ENCODE measurements at regions of chr1 and their contacts with region 1.

Region 1: DNA sequence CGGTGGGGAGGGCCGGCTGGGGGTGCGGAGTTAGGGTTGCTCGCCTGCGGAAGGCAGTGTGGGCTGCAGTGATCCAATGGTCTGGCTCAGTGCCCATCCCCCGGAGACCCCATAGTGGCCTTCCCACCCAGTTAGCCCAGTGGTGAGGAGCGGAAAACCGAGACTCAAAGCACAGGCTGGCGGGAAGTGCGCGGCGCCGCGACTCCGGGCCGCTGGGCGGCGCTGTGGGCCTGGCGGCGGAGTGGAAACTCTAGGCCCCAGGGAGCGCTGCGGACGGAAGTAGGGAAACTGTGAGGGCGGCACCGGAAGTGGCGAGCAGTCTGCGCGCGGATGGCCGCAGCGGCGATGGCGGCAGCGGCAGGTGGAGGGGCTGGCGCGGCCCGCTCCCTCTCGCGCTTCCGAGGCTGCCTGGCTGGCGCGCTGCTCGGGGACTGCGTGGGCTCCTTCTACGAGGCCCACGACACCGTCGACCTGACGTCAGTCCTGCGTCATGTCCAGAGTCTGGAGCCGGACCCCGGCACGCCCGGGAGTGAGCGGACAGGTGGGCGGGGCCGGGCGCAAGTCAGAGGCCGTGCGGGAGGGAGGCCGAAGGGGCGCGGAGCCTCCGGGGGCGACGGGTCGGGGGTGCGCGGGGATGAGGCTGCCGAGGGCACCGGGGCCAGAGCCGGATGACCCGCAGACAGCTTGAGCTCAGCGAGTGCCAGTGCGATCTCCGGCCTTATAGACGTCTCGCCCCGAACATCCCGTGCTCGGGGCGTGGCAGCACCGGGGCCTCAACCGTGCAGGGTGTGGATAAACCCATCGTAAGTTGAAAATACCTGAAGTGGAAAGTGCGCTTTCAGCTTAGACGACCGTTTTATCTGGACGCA is at the start of gene ADPRS:
- DNase-seq: peak; percentile 88
- H3K4me3 Mint-ChIP-seq: peak within 1 kb of the TSS; percentile 97
- H3K27ac Mint-ChIP-seq: peak within 1 kb of the TSS; percentile 96
- H3K4me1 Mint-ChIP-seq: peaks cover 20% of the 10 kb centered on the region
- H3K27me3 Mint-ChIP-seq: peaks cover 7% of the 10 kb centered on the region
- total RNA-seq, gene ADPRS: 32.6 and 33.6 TPM in 2 replicates

Region 2: GRCh38 chr1:35882945-35883634 is 205.7 kb before region 1 on chr1 and contains the start of gene AGO1:
- intact Hi-C with region 1: loop called (anchors 1 kb)
- DNase-seq: peak; percentile 97
- H3K4me3 Mint-ChIP-seq: peak within 1 kb of the TSS; percentile 95
- H3K27ac Mint-ChIP-seq: peak within 1 kb of the TSS; percentile 64
- H3K4me1 Mint-ChIP-seq: peaks cover 48% of the 10 kb centered on the region
- H3K27me3 Mint-ChIP-seq: peaks cover 6% of the 10 kb centered on the region
- total RNA-seq, gene AGO1: 39.0 and 39.5 TPM in 2 replicates

Region 3: DNA sequence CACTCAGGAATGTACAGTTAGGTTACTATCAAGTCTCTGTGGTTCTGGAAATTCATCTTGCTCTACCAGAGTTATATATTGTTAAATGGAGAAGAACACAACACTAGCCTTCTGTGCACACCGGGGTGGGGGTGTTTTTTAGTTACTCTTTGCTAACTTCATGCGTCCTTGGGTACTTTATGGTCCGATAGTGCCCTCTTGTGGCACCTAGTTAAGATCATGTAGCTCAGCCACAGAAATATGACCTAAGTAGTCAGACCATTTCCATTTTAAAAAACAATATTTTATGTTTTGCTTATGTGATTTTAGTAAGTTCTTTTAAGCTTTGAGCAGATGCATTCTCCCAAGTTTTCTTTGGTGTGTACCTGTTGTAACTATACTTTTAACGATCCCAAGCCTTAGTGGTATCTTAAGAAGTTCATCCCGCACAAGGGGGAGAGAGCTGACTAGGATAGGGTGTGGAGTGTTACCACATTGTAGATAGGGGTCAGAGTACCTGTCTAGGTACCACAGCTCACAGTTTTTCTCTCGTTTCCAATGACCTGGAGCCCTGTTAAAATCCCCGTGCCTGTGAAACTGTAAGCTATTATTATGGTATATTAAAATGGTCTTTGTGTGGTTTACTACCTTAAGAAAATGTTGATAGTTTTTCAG is 196.8 kb after region 1 on chr1:
- intact Hi-C with region 1: loop called (anchors 5 kb)
- DNase-seq: peak; percentile 53
- H3K4me3 Mint-ChIP-seq: no peak overlapping the region
- H3K27ac Mint-ChIP-seq: peak overlapping the region; percentile 63
- H3K4me1 Mint-ChIP-seq: peaks cover 42% of the 10 kb centered on the region
- H3K27me3 Mint-ChIP-seq: no peaks in the 10 kb centered on the region

Region 4: DNA sequence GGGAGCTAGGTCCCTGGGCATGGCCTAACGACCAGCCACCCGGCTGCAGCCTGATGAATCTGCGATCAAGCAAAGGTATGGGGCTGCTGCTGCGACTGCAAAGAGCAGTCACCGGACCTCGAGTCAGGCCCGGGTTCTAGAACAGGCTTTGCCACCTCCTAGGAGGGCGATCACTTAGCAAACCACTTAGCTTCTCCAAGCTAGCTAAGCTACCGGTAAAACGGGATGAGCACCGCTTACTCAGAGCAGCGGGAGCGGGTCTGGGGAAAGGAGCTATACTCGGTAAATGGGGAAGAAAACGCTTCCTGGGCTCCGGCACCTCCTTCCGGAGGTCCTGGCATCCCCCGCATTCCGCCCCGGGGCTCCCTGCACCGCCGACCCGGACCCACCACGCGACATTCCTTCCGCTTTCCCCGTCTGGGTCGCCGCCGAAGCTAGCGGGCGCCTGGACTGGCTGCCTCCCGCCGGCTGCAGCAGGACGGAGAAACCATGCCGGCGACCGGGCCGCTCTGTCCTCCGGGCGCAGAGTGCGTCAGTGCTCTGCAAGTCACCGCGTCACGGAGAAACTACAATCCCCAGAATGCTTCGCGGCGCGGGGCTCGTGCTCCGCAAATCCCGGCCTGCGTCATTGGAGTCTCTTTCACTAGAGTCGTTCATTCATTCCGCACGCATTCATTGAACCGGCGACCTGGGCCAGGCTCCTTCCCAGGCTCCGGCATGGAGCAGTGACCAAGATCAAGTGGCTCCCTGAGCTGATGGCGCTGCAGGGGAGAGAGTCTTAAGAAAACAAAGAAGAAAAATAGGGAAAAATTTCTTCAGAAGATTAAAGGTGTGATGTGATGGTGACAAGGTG is 308.8 kb after region 1 on chr1 and contains the start of gene LSM10:
- intact Hi-C with region 1: loop called (anchors 1 kb)
- DNase-seq: peak; percentile 88
- H3K4me3 Mint-ChIP-seq: peak within 1 kb of the TSS; percentile 97
- H3K27ac Mint-ChIP-seq: peak within 1 kb of the TSS; percentile 98
- H3K4me1 Mint-ChIP-seq: peaks cover 29% of the 10 kb centered on the region
- H3K27me3 Mint-ChIP-seq: no peaks in the 10 kb centered on the region
- total RNA-seq, gene LSM10: 57.5 and 63.8 TPM in 2 replicates

Region 5: DNA sequence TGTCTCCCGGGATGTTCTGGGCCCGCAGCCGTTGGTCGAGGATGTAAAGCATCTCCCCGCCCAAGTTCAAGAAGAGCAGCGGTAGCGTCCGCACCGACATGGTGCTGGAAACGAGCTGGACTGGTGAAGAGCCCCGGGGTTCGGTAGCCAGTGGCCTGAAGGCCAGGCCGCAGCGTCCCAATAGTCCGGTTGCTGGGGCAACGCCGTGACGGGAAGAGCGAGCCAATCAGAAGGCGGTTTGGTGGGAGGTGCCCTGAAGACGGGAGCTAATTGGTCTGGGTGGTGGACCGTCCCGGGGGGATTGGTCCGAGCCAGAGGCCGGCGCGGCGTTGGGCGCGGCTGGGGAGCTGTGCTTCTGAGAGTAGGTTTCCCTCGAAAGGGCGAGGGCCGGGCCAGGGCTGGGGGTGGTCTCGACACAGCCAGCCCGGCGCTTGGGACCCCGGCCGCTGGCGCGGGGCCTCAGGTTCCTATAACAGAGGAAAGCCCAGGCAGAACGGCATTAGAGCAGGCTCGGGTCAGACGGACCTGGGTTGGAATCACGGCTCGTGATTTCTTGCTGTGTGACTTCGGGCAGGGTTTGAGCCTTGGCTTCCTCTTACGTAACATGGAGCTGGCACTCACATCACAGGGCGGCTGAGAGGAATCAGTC is 361.6 kb after region 1 on chr1 and contains the start of gene OSCP1:
- intact Hi-C with region 1: loop called (anchors 1 kb)
- DNase-seq: peak; percentile 86
- H3K4me3 Mint-ChIP-seq: peak within 1 kb of the TSS; percentile 86
- H3K27ac Mint-ChIP-seq: peak within 1 kb of the TSS; percentile 82
- H3K4me1 Mint-ChIP-seq: peaks cover 11% of the 10 kb centered on the region
- H3K27me3 Mint-ChIP-seq: no peaks in the 10 kb centered on the region
- total RNA-seq, gene OSCP1: 0.39 and 0.96 TPM in 2 replicates

Measured in activated T-helper 1 cell treated with anti-CD3 and anti-CD28 coated beads, Interleukin-12 subunit alpha, Interleukin-12 subunit beta, Interleukin-2, Interleukin-4 antibody, amounts not matched to agents 30 ng/mL and 10 ng/mL and 1 ng/mL, durations not matched to agents 14 hours and 24 hours and 36 hours (primary cell).